ENCODE measurements at regions of chr6 and their contacts with region 1.

Region 1: DNA sequence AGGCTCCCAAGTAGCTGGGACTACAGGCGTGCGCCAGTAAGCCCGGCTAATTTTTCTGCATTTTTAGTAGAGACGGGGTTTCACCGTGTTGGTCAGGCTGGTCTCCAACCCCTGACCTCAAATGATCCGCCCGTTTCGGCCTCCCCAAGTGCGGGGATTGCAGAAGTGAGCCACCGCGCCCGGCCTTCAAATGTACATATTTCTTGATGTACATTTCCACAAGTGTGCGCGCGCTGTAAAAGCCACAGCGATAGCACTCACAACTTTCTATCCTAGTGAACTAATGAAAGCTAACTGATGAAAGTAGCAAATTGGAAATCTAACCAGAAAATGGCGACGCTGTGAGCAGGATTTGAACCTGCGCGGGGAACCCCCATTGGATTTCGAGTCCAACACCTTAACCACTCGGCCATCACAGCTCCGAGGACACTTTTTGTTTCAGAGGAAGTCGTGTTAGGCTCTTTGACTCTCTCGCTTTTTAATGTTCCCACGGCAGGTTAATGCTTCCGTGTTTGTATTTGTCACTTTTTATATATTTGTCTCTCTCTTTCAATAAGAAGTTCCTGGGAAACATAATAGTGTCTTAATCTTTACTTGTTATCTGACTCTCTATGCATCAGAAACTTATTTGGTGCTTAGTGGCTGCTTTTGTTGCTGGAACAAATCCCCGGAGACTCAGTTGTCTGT is 199.4 kb upstream of the ZNF184 start:
- DNase-seq: peak; percentile 70
- CTCF ChIP-seq: no peak

Region 2: GRCh38 chr6:27687154-27688013 is 15.1 kb after region 1 on chr6:
- CTCF ChIA-PET with region 1: interaction called, 19 read pairs
- POLR2A ChIA-PET with region 1: no interaction called
- DNase-seq: peak; percentile 83
- CTCF ChIP-seq: peak; percentile 94

Region 3: DNA sequence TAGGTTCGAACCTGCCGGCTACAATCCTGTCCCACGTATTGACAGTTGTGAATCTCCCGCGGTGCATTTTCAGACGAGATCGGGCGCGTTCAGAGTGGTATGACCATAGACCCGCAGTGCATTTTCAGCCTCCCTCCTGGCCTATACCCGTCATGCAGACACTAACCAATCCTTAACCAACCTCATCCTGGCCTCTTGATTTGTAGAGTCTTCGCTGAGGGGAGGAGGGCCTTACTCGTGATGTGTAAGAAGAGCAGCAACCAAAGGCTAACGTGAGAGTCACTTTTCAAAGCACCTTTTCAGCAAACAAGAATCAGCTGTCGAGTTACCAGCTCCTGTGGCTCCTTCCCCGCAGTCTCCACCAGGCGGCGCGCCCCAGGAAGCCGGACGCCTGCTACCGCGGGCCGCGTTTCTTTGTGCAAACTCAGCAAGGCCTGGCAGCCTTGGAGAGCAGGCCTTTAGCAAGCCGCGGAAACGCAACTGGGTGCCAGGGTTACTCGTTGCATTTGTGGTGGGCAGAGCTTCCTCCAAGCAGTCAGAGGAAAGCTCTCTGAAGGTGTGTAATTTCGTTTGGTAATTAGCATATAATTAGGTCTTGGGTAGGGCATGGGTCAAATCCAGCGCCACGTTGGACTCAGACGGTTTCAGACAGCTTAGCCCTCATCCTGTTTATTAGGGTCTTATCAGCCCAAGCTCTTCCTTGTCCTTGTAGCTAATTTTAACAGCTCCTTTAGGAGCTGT is 100.2 kb after region 1 on chr6:
- CTCF ChIA-PET with region 1: interaction called, 10 read pairs
- POLR2A ChIA-PET with region 1: no interaction called
- DNase-seq: peak; percentile 81
- CTCF ChIP-seq: peak; percentile 82

Region 4: DNA sequence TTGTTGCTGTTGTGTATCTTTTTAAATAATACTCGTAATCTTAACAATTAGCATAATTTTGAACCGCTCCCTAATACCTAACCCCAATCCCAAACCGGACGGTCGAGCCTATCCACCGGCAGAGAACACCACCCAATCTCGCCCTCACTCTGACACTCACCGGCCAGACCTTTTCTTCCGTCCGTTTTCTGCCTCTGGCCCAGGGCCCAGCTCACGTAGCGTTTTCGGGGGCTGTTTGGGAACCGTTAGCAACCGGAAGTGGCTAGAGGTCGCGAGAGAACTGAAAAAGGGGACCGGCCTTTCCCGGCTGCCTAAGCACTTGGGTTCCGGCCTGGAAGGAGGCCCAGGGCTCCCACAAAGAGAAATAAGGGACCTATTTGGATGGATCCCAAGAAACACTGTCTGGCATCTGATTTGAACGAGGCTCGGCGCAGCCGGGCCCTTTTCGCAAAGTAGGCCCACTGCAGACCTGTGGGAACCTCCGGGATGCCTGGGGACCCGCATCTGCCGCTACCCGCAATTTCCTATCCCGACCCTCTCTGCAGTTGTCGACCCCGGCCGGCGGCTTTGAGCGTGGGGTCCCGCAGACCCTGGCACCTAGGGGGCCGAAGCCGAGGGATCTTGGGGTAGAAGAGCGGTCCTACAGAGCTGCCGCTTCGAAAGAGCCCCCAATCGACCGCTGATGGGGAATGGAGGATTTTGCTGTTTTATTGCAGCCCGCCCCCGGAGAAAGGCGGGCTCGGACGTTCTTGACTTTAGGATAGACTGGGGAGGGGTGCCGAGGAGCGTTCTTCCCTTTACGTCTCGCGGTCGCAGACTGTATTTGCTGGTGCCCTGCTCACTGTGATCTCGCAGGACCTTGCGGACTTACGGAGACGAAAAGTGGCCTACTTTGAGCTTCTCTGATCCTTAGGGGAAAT is 464.6 kb after region 1 on chr6:
- CTCF ChIA-PET with region 1: no interaction called
- POLR2A ChIA-PET with region 1: no interaction called
- DNase-seq: peak; percentile 78
- CTCF ChIP-seq: no peak

Region 5: DNA sequence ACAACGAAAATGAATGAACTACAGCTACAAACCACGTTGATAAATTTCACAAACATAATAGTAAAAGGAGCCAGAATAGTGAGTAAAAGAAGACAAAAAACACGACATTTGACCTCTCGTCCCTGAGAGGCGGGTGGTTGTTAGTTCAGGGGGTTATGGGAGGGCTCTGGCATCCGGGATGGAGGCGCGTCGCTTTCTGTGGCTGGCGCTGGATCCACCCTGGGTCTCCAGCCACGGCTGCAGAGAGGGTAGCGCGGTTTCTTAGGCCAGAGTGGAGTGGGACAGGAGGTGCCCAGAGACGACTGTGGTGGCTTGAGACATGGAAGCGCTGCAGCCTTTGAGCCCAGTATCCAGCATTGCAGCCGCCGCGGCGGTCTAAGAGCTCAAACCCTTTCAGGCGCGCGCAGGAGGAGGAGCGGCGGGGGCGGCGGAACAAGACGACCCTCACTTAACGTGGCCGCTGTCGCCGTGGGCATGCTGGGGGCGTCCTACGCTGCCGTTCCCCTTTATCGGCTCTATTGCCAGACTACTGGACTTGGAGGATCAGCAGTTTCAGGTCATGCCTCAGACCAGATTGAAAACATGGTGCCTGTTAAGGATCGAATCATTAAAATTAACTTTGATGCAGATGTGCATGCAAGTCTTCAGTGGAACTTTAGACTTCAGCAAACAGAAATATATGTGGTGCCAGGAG is 774.7 kb after region 1 on chr6:
- CTCF ChIA-PET with region 1: no interaction called
- POLR2A ChIA-PET with region 1: no interaction called
- DNase-seq: no peak
- CTCF ChIP-seq: no peak

Measured in GM10248 (cell line).